ENCODE measurements at regions of chr4 and their contacts with region 1.

Region 1: GRCh38 chr4:182938205-182938645 is 21.0 kb upstream of the DCTD start:
- DNase-seq: peak; percentile 41
- H3K4me3 ChIP-seq: no peak overlapping the region
- H3K27ac ChIP-seq: no peak overlapping the region
- H3K4me1 ChIP-seq: no peaks in the 10 kb centered on the region
- H3K27me3 ChIP-seq: peaks cover 4% of the 10 kb centered on the region
- CTCF ChIP-seq: peak; percentile 88 to 98

Region 2: GRCh38 chr4:182897601-182898478 is 40.4 kb before region 1 on chr4:
- CTCF ChIA-PET with region 1: no interaction called
- dilution Hi-C with region 1: no loop called
- in situ Hi-C with region 1: no loop called
- intact Hi-C with region 1: no loop called
- DNase-seq: no peak
- H3K4me3 ChIP-seq: no peak overlapping the region
- H3K27ac ChIP-seq: no peak overlapping the region
- H3K4me1 ChIP-seq: no peaks in the 10 kb centered on the region
- H3K27me3 ChIP-seq: no peaks in the 10 kb centered on the region
- CTCF ChIP-seq: no peak

Region 3: DNA sequence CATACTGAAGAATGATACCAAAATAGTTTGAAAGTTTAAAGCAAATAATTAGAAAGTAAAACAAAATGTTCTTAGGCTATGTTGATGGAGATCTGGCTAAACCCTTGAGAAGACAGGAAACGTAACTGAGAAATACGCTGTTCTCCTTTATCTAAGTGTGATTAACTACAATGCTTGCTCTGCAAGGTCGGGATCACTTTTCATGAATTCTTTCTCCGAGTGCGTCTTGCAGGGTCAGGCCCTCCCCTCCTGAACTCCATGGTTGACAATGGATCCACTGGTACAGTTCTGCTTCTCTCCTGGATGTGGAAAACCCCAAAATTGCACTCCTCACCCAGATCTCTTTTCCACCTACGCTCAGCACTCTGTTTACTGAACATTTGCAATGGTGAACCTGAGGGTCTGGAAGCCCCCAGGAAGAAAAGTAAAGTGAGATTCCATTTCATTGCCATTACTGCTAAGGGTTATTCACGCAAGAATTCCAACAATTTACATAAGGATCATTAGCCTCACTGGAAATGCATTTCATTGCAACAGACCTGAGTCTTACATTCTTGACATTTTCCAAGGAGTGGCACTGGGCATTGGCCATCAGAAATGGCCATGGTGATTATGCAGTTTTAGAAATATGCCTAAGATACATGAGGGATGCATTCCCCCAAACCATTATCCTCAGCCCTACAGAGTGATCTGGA is 136.2 kb after region 1 on chr4:
- CTCF ChIA-PET with region 1: no interaction called
- dilution Hi-C with region 1: no loop called
- in situ Hi-C with region 1: loop called (anchors 5 to 25 kb)
- intact Hi-C with region 1: loop called (anchors 1 kb)
- DNase-seq: no peak
- H3K4me3 ChIP-seq: no peak overlapping the region
- H3K27ac ChIP-seq: no peak overlapping the region
- H3K4me1 ChIP-seq: no peaks in the 10 kb centered on the region
- H3K27me3 ChIP-seq: no peaks in the 10 kb centered on the region
- CTCF ChIP-seq: no peak

Region 4: DNA sequence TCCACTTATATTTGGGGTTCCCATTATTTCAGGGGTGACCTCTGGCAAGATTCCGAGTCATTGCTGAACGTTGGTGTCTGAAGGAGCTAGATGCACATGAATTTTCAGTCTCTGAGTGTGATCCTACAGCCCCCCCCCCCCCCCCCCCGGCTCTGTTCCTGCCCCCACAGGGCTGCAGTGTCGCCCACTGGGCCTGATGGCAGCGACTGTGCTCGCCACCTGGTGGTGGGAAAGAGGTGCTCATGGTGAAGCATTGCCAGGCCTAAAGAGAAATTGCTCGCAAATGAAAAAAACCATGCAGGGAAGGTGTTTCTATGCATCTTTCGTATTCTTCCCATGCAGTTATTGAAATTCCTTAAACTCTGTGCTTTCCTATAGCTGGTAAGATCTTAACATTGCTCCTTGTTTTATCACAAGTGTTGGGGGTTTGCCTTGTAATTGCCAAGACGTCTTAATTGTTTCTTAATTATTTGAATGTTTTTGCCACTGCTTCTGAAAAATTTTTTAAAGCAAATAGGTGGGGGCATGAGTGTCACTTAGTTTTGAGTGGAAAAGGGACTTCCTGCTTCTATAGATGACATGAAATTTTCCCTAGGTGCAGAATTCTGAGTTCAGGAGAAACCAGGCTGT is 318.6 kb after region 1 on chr4:
- CTCF ChIA-PET with region 1: interaction called, 8 read pairs
- dilution Hi-C with region 1: no loop called
- in situ Hi-C with region 1: loop called (anchors 5 to 10 kb)
- intact Hi-C with region 1: loop called (anchors 1 kb)
- DNase-seq: peak; percentile 20
- H3K4me3 ChIP-seq: no peak overlapping the region
- H3K27ac ChIP-seq: no peak overlapping the region
- H3K4me1 ChIP-seq: no peaks in the 10 kb centered on the region
- H3K27me3 ChIP-seq: no peaks in the 10 kb centered on the region
- CTCF ChIP-seq: peak; percentile 82 to 85

Region 5: DNA sequence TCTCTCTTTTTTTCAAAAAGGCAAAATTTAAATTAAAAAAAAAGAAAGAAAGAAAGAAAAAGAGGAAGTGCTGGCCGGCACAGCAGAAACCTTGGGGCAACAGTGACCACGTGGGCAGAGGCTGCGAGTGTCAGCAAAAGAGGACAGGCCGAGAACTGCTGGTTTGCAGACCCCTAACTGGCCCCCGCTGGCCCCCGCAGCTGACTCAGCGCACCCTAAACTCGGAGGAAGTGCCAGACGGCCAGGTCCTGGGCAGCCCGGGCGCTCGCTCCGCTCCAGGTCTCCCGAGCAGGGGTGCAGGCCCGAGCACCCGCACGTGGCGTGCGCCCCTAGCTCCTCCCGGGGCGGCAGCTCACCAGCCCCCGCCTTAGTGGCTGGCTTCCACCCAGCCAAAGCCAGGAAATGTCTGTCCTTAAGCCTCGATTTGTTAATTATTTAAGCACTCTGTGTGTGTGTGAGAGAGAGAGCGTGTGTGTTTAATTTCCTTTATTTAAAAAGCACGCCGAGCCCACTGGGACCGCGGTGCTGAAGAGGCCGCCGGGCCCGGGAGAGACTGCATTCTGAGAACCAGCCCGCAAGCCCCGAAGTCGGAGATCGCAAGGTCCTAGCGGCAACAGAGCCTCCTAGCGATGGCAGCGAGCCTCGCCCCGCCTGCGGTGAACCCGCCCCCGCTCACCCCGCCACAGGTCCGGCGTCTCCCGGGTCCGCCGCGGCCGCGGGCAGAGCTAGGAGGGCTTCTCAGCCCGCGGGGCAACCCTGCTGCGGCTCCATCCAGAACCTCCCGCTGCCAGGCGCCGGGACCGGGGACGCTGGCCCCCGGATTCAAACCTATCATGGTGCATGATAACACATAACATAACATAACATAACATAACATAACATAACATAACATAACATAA is 460.3 kb after region 1 on chr4:
- CTCF ChIA-PET with region 1: no interaction called
- dilution Hi-C with region 1: no loop called
- in situ Hi-C with region 1: no loop called
- intact Hi-C with region 1: loop called (anchors 2 kb)
- DNase-seq: peak; percentile 59
- H3K4me3 ChIP-seq: peak overlapping the region; percentile 52 to 56 (median 55)
- H3K27ac ChIP-seq: peak overlapping the region; percentile 45
- H3K4me1 ChIP-seq: peaks cover 9% of the 10 kb centered on the region
- H3K27me3 ChIP-seq: no peaks in the 10 kb centered on the region
- CTCF ChIP-seq: peak; percentile 53 to 83